Panc1 (cell line): ENCODE measurements at regions of chr12 and their contacts with region 1.

Region 1: DNA sequence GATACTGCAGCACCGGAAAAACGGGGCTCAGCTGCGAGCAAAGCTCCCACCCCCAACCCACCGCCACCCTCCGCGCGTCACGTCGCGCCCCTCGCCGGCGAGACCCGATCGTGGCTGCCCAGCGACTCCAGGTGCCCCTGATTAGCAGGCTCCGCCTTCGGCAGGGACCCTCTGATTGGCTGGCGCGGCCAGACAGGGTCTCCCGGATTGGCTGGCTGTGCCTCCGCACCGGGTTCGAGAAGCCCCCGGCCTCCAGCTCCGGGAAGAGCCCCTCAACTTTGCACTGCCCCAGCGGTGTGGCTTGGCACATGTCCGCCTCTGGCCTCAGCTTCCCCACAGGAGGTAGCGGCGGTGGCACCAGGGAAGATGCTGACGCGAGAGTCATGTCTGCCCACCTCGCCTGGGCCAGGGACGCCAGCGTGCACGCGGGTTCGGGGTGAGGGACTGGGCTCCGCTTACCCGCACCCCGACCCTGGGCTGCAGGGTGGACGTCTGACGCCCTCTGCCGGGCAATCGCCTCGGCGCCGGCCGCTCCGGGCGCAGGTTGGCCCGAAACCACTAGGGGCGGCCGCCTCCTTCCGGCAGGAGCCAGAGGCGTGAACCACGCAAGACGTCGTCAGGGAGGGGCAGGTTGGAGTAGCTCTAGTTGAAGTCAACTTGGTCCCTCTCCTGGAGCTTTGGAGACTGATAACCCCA is 498 bp upstream of the RHOF start:
- DNase-seq: no peak
- ATAC-seq: peak; percentile 66
- H3K4me3 ChIP-seq: peak overlapping the region; percentile 75 to 77
- H3K27ac ChIP-seq: peak overlapping the region; percentile 91
- H3K4me1 ChIP-seq: peaks cover 68% of the 10 kb centered on the region
- H3K27me3 ChIP-seq: no peaks in the 10 kb centered on the region
- CTCF ChIP-seq: peak; percentile 97

Region 2: GRCh38 chr12:121697098-121697698 is 96.8 kb before region 1 on chr12:
- CTCF ChIA-PET with region 1: interaction called, 4 read pairs
- POLR2A ChIA-PET with region 1: no interaction called
- in situ Hi-C with region 1: no loop called
- intact Hi-C with region 1: loop called (anchors 5 kb)
- DNase-seq: no peak
- ATAC-seq: peak; percentile 46
- H3K4me3 ChIP-seq: no peak overlapping the region
- H3K27ac ChIP-seq: no peak overlapping the region
- H3K4me1 ChIP-seq: no peaks in the 10 kb centered on the region
- H3K27me3 ChIP-seq: no peaks in the 10 kb centered on the region
- CTCF ChIP-seq: no peak

Region 3: GRCh38 chr12:121773011-121773777 is 20.8 kb before region 1 on chr12:
- CTCF ChIA-PET with region 1: interaction called, 11 read pairs
- POLR2A ChIA-PET with region 1: no interaction called
- in situ Hi-C with region 1: no loop called
- intact Hi-C with region 1: no loop called
- DNase-seq: peak; percentile 47
- ATAC-seq: peak; percentile 79
- H3K4me3 ChIP-seq: no peak overlapping the region
- H3K27ac ChIP-seq: peak overlapping the region; percentile 5; the same call in 1 of the 2 replicates
- H3K4me1 ChIP-seq: peaks cover 25% of the 10 kb centered on the region
- H3K27me3 ChIP-seq: no peaks in the 10 kb centered on the region
- CTCF ChIP-seq: peak; percentile 96

Region 4: GRCh38 chr12:121781998-121782979 is 11.7 kb before region 1 on chr12:
- CTCF ChIA-PET with region 1: interaction called, 18 read pairs
- POLR2A ChIA-PET with region 1: interaction called, 3 read pairs
- in situ Hi-C with region 1: no loop called
- intact Hi-C with region 1: no loop called
- DNase-seq: no peak
- ATAC-seq: no peak
- H3K4me3 ChIP-seq: 0 out of 4 replicates have a peak overlapping the region, but pooled peaks of 1 of the 2 experiments have one; percentile 14
- H3K27ac ChIP-seq: peak overlapping the region; percentile 73
- H3K4me1 ChIP-seq: peaks cover 43% of the 10 kb centered on the region
- H3K27me3 ChIP-seq: no peaks in the 10 kb centered on the region
- CTCF ChIP-seq: no peak

Region 5: GRCh38 chr12:121811434-121812319 is 17.7 kb after region 1 on chr12:
- CTCF ChIA-PET with region 1: interaction called, 72 read pairs
- POLR2A ChIA-PET with region 1: interaction called, 11 read pairs
- in situ Hi-C with region 1: no loop called
- intact Hi-C with region 1: no loop called
- DNase-seq: no peak
- ATAC-seq: peak; percentile 89
- H3K4me3 ChIP-seq: peak overlapping the region; percentile 59 to 82
- H3K27ac ChIP-seq: peak overlapping the region; percentile 80
- H3K4me1 ChIP-seq: peaks cover 27% of the 10 kb centered on the region
- H3K27me3 ChIP-seq: no peaks in the 10 kb centered on the region
- CTCF ChIP-seq: peak; percentile 100

Region 6: DNA sequence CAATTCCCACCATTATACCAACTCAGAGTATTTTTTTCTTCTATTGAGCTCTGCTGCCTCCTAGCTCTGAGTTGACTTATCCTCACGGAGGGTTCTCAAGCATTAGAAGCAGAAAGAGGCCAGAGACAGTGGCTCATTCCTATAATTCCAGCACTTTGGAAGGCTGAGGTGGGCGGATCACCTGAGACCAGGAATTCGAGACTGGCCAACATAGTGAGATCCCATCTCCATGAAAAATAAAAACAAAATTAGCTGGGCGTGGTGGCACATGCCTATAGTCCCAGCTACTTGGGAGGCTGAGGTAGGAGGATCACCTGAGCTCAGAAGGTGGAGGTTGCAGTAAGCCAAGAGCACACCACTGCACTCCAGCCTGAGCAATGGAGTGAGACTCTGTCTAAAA is 43.7 kb after region 1 on chr12:
- CTCF ChIA-PET with region 1: interaction called, 15 read pairs
- POLR2A ChIA-PET with region 1: no interaction called
- in situ Hi-C with region 1: no loop called
- intact Hi-C with region 1: no loop called
- DNase-seq: no peak
- ATAC-seq: no peak
- H3K4me3 ChIP-seq: no peak overlapping the region
- H3K27ac ChIP-seq: no peak overlapping the region
- H3K4me1 ChIP-seq: no peaks in the 10 kb centered on the region
- H3K27me3 ChIP-seq: no peaks in the 10 kb centered on the region
- CTCF ChIP-seq: no peak

Region 7: GRCh38 chr12:121888478-121889266 is 94.7 kb after region 1 on chr12 and contains the start of gene PSMD9:
- CTCF ChIA-PET with region 1: interaction called, 21 read pairs
- POLR2A ChIA-PET with region 1: no interaction called
- in situ Hi-C with region 1: no loop called
- intact Hi-C with region 1: loop called (anchors 2 kb)
- DNase-seq: peak; percentile 85
- ATAC-seq: peak; percentile 99
- H3K4me3 ChIP-seq: peak within 1 kb of the TSS; percentile 86 to 91
- H3K27ac ChIP-seq: peak within 1 kb of the TSS; percentile 98
- H3K4me1 ChIP-seq: peaks cover 15% of the 10 kb centered on the region
- H3K27me3 ChIP-seq: no peaks in the 10 kb centered on the region
- CTCF ChIP-seq: peak; percentile 71
- total RNA-seq, gene PSMD9: 62.7 TPM